ENCODE measurements at regions of chr6 and their contacts with region 1.

Region 1: GRCh38 chr6:80605165-80605989 is 498.9 kb downstream of the BCKDHB start:
- DNase-seq: no peak
- ATAC-seq: peak; percentile 73

Region 2: GRCh38 chr6:80338201-80338836 is 267.1 kb before region 1 on chr6:
- intact Hi-C with region 1: loop called (anchors 10 kb)
- DNase-seq: peak; percentile 63
- ATAC-seq: peak; percentile 71

Region 3: DNA sequence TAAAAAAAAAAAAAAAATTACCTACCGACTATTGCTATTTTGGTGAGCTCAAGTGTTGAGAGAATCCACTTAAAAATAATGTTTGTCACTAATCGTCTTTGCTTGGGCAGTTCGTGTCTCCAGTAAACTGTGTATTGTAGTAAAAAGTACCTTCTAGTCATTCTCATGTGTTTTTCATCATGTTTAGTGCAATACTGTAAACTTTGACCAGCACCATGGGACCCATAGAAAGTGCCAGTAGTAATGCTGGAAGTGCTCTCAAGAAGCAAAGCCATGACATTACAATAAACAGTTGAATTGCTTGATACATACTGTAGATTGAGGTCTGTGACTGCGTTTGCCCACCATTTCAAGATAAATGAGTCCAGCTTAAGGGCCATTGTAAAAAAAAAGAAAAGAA is 103.7 kb before region 1 on chr6:
- intact Hi-C with region 1: no loop called
- DNase-seq: no peak
- ATAC-seq: no peak

Measured in Right ventricle myocardium superior (tissue), 1 donor.